ENCODE measurements at regions of chr2 and their contacts with region 1.

Region 1: DNA sequence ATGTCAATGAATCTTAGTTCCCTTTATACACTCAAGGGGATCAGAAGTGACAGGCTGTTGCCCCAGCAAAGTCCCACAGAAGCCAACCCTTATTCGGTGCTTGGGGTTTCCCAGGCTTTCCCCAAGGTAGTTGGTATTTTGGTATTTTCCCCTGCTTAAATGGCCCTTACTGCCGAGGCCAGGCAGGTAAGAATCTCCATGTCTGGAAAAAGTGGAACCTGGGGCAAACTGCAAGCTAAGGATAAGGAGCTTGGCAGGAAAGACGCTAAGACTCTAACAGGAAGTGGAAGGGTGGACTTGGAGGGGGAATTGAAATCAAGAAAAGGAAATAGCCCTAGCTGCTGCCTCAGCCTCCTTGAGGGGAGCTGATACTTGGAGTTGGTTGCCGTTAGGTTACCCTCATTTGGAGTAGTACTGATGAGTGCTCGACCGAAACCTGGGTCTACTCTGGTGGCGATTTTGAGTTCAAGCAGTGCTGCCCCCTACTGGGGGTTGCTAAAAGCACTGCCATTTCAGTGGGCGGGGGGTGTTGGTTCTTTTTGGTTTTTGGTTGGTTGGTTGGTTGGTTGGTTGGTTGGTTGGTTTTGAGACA is 3.3 kb upstream of the GPBAR1 start:
- DNase-seq: peak; percentile 56
- ATAC-seq: peak; percentile 90
- H3K4me3 ChIP-seq: no peak overlapping the region
- H3K27ac ChIP-seq: peak overlapping the region; percentile 31
- H3K4me1 ChIP-seq: peaks cover 31% of the 10 kb centered on the region
- H3K27me3 ChIP-seq: no peaks in the 10 kb centered on the region
- CTCF ChIP-seq: peak; percentile 58 to 77 (median 76)
- EP300 ChIP-seq: no peak
- POLR2A ChIP-seq: no peak
- RAD21 ChIP-seq: peak; percentile 51

Region 2: DNA sequence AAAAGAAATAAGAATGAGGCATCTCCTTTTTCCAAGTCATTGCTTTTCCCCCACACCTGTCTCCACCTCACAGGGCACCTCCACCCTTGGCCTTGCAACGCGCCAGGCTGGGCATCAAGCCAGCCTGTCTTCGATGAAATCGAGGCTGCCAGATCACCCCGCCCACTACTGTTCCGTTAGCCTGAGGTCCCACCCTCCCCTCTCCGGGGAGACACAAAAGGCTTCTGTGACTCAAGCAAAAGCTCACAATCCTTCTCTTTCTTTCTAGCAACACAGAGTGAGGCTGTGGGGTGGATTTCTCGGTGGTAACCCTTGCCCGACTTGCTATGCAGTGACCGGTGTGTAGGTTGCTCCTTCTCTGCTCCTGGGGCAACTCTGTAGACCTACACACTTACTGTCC is 1407.5 kb before region 1 on chr2:
- CTCF ChIA-PET with region 1: no interaction called
- POLR2A ChIA-PET with region 1: no interaction called
- RAD21 ChIA-PET with region 1: no interaction called
- SMC1A ChIA-PET with region 1: no interaction called
- in situ Hi-C with region 1: no loop called
- intact Hi-C with region 1: no loop called
- DNase-seq: no peak
- ATAC-seq: no peak
- H3K4me3 ChIP-seq: no peak overlapping the region
- H3K27ac ChIP-seq: no peak overlapping the region
- H3K4me1 ChIP-seq: no peaks in the 10 kb centered on the region
- H3K27me3 ChIP-seq: no peaks in the 10 kb centered on the region
- CTCF ChIP-seq: no peak
- EP300 ChIP-seq: no peak
- POLR2A ChIP-seq: no peak
- RAD21 ChIP-seq: no peak

Region 3: DNA sequence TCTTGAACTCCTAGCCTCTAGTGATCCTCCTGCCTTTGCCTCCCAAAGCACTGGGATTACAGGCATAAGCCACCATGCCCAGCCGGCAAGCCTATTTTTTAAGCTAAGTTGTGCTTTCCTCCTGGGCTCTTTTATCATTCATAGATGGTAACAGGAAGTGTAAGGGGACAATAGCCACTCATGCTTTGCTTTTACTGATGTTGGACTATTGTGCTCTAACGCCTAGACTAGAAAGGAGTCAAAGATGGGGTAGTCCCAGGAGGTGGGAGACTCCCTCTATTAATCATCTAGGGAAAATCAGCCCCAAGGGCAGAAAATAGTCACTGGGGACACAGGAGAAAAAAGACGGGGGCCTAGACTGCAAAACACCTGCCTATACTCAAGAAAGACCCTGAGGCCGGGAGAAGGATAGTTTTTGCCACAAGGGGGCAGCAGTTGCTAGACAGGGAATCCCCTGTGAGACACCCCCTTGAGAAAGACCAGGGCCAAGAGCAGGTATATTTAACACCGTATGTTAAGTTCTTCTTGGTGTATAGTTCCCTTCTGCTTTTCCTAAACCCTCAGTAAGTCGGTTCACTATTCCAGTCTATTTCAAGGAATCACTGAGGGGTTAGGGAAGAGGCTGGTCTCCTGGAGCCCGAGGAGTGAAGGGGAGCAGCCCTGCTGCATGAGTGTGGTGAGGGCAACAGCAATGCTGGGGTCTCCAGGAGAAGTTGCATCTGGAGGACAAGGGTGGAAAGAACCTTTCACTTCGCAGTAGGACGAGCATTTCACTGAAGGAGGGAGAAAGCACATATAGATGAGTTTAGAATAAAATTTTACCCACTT is 88.6 kb before region 1 on chr2:
- CTCF ChIA-PET with region 1: interaction called, 11 read pairs
- POLR2A ChIA-PET with region 1: no interaction called
- RAD21 ChIA-PET with region 1: interaction called, 3 read pairs
- SMC1A ChIA-PET with region 1: interaction called, 7 read pairs
- in situ Hi-C with region 1: no loop called
- intact Hi-C with region 1: loop called (anchors 5 kb)
- DNase-seq: no peak
- ATAC-seq: peak; percentile 98
- H3K4me3 ChIP-seq: no peak overlapping the region
- H3K27ac ChIP-seq: no peak overlapping the region
- H3K4me1 ChIP-seq: no peaks in the 10 kb centered on the region
- H3K27me3 ChIP-seq: no peaks in the 10 kb centered on the region; a peak in 3 of 4 replicates
- CTCF ChIP-seq: peak; percentile 58 to 86 (median 70)
- EP300 ChIP-seq: no peak
- POLR2A ChIP-seq: no peak
- RAD21 ChIP-seq: peak; percentile 57

Region 4: DNA sequence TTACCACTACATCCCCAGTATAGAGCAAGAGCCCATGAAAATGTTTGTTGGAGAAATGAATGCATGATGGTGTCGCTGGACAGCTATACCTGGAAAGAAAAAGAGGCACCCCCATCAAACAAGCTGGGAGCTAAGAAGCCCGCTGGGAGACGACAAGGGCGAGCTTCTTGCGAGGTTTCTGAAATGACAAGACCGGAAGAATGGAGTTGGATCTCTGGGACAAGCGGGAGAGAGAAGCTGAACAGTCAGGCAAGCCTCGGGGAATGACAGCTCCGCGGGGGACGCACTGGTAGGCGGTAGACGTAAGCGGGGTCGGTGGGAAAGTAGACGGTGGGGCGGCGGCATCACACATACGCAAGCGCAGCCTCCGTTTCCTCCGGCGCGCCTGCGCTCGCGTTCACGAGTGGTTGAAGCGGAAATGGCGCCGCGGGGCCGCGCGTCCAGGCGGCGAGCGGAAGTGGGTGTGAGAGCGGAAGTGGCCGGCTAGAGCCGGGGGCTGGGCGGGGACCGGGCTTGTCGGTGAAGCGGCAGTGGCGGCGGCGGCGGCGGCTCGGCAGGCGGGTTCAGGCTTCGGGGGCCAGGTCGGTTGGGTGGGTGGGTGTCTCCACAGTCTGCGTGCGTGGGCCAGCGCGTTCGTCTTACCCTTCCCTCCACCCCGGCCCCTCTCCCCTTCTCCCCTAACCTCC is 40.7 kb before region 1 on chr2 and contains the start of gene ARPC2:
- CTCF ChIA-PET with region 1: interaction called, 17 read pairs
- POLR2A ChIA-PET with region 1: no interaction called
- RAD21 ChIA-PET with region 1: interaction called, 7 read pairs
- SMC1A ChIA-PET with region 1: interaction called, 9 read pairs
- in situ Hi-C with region 1: no loop called
- intact Hi-C with region 1: no loop called
- DNase-seq: peak; percentile 75
- ATAC-seq: peak; percentile 78
- H3K4me3 ChIP-seq: peak within 1 kb of the TSS; percentile 93
- H3K27ac ChIP-seq: peak within 1 kb of the TSS; percentile 99
- H3K4me1 ChIP-seq: peaks cover 12% of the 10 kb centered on the region
- H3K27me3 ChIP-seq: no peaks in the 10 kb centered on the region
- CTCF ChIP-seq: no peak
- EP300 ChIP-seq: peak in 1 of 2 experiments; percentile 65; a peak in 3 of 4 replicates
- POLR2A ChIP-seq: peak; percentile 81
- RAD21 ChIP-seq: no peak
- polyA plus RNA-seq, gene ARPC2: 711 to 735 TPM

Region 5: GRCh38 chr2:218245214-218245613 is 12.3 kb before region 1 on chr2:
- CTCF ChIA-PET with region 1: interaction called, 10 read pairs
- POLR2A ChIA-PET with region 1: interaction called, 3 read pairs
- RAD21 ChIA-PET with region 1: interaction called, 4 read pairs
- SMC1A ChIA-PET with region 1: interaction called, 5 read pairs
- in situ Hi-C with region 1: no loop called
- intact Hi-C with region 1: no loop called
- DNase-seq: no peak
- ATAC-seq: no peak
- H3K4me3 ChIP-seq: no peak overlapping the region
- H3K27ac ChIP-seq: no peak overlapping the region
- H3K4me1 ChIP-seq: no peaks in the 10 kb centered on the region
- H3K27me3 ChIP-seq: no peaks in the 10 kb centered on the region
- CTCF ChIP-seq: no peak
- EP300 ChIP-seq: no peak
- POLR2A ChIP-seq: 0 out of 2 replicates have a peak, but pooled peaks have one; percentile 34
- RAD21 ChIP-seq: no peak

Region 6: DNA sequence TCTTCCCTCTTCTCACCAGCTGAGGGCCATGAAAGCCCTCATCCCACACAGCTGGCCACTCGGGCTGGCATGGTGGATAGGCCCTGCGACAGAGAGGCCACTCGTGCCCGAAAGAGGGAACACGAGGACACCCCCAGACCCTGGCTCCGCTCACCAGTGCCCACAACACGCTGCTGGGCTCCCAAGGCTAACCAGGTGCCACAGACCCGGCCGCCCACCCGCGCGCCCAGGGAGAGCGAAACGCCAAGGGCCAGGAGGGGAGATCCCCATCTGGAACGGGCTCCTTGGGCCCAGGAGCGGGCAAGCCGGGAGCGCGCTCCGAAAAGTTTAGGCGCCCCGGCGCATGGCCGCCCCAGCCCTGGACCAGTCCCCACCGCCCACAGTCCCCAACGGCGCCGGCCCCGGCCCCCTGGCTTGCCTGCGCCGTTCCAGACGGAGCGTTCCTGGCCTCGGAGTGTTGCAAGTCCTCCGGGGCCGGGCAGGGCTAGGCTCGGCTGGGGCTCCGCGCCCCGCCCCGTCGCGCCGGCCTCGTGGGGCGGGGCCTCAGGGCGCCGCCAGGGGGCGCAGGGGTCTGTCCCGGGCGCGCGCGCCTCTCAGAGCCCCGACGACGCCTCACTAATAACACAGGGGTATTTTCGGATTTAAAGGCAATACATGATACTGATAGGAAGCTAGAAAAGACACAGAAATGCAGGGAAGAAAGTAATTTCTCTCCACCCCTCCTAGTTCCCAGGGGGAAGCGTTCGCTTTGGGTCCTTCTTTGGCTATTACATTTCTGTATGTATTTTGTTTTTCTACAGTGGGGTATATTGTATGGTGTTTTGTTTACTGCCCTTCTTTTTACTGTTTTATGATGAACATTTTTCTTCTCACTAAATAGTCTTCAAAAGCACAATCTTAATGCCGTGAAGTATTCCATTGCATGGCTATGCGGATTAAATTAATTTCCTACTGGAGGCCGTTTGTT is 34.8 kb after region 1 on chr2 and contains the start of gene TMBIM1:
- CTCF ChIA-PET with region 1: interaction called, 11 read pairs
- POLR2A ChIA-PET with region 1: interaction called, 5 read pairs
- RAD21 ChIA-PET with region 1: interaction called, 3 read pairs
- SMC1A ChIA-PET with region 1: interaction called, 3 read pairs
- in situ Hi-C with region 1: no loop called
- intact Hi-C with region 1: no loop called
- DNase-seq: no peak
- ATAC-seq: peak; percentile 87
- H3K4me3 ChIP-seq: peak within 1 kb of the TSS; percentile 85
- H3K27ac ChIP-seq: peak within 1 kb of the TSS; percentile 72
- H3K4me1 ChIP-seq: peaks cover 28% of the 10 kb centered on the region
- H3K27me3 ChIP-seq: no peaks in the 10 kb centered on the region
- CTCF ChIP-seq: peak; percentile 68 to 92 (median 85)
- EP300 ChIP-seq: no peak
- POLR2A ChIP-seq: peak; percentile 58
- RAD21 ChIP-seq: peak; percentile 51
- polyA plus RNA-seq, gene TMBIM1: 6.1 to 11.7 TPM

Region 7: DNA sequence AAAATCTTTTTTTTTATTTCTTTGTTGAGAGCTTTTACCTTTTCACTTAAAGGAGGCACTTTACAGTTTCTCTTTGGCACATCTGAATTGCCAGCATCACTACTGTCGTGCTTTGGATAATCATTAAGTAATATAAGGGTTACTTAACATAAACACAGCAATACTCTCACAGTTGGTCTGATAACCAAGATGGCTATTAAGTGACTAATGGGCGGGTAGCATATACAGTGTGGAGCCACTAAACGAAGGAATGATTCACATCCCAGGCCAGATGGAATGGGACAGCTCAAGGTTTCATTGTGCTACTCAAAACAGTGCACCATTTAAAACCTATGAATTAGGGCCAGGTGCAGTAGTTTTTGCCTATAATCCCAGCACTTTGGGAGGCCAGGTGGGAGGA is 282.5 kb after region 1 on chr2:
- CTCF ChIA-PET with region 1: no interaction called
- POLR2A ChIA-PET with region 1: no interaction called
- RAD21 ChIA-PET with region 1: no interaction called
- SMC1A ChIA-PET with region 1: no interaction called
- in situ Hi-C with region 1: no loop called
- intact Hi-C with region 1: no loop called
- DNase-seq: no peak
- ATAC-seq: no peak
- H3K4me3 ChIP-seq: no peak overlapping the region
- H3K27ac ChIP-seq: no peak overlapping the region
- H3K4me1 ChIP-seq: no peaks in the 10 kb centered on the region
- H3K27me3 ChIP-seq: no peaks in the 10 kb centered on the region
- CTCF ChIP-seq: no peak
- EP300 ChIP-seq: no peak
- POLR2A ChIP-seq: no peak
- RAD21 ChIP-seq: no peak

Measured in GM12878 (cell line).